ENCODE measurements at regions of chr3 and their contacts with region 1.

Region 1: DNA sequence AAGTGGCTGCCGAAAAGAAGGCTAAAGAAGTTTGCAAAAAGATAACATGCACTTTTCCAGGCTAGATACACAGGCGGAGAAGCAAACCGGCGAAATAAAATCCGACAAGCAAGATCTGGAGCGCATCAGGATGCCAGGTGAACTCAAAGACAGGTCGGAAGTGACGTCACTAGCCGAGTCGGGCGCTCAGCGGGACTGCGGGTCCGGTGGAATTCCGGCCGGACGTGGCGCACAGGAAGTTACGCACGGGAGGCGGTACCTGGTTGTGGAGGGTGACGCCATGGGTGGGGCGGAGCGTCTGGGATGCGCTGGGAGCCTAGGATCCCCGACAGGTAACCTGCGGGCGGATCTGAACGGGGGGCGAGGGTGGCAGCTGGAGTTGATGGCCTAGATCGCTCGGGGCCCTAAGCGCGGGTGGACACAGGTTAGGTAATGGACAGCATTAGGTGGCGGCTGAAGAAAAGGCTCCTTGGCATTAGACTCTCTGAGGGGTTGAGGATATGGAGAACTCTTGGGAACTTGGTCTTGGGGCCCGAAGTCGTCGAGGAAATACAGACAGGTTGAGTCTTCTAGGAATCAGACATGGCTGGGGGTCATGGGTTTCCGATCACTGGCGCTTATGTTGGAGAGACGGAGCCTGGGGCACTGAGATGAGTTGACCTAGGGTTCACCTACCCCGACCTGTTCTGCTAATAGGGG is 29.0 kb upstream of the EHHADH start:
- DNase-seq: peak; percentile 91
- H3K4me3 Mint-ChIP-seq: peak overlapping the region; percentile 96
- H3K27ac Mint-ChIP-seq: peak overlapping the region; percentile 80
- H3K4me1 Mint-ChIP-seq: peaks cover 19% of the 10 kb centered on the region
- H3K27me3 Mint-ChIP-seq: peaks cover 3% of the 10 kb centered on the region

Region 2: GRCh38 chr3:185253645-185254410 is 29.0 kb before region 1 on chr3 and contains the start of gene EHHADH:
- intact Hi-C with region 1: loop called (anchors 2 kb)
- DNase-seq: peak; percentile 42
- H3K4me3 Mint-ChIP-seq: peak within 1 kb of the TSS; percentile 77
- H3K27ac Mint-ChIP-seq: no peak within 1 kb of the TSS
- H3K4me1 Mint-ChIP-seq: no peaks in the 10 kb centered on the region
- H3K27me3 Mint-ChIP-seq: no peaks in the 10 kb centered on the region
- total RNA-seq, gene EHHADH: 1.4 and 1.8 TPM in 2 replicates

Region 3: GRCh38 chr3:185585859-185586685 is 303.2 kb after region 1 on chr3 and contains the start of gene SENP2:
- intact Hi-C with region 1: loop called (anchors 1 kb)
- DNase-seq: peak; percentile 99
- H3K4me3 Mint-ChIP-seq: peak within 1 kb of the TSS; percentile 86
- H3K27ac Mint-ChIP-seq: peak within 1 kb of the TSS; percentile 86
- H3K4me1 Mint-ChIP-seq: peaks cover 20% of the 10 kb centered on the region
- H3K27me3 Mint-ChIP-seq: no peaks in the 10 kb centered on the region
- total RNA-seq, gene SENP2: 33.5 and 34.6 TPM in 2 replicates